ENCODE measurements at regions of chr3 and their contacts with region 1.

Region 1: GRCh38 chr3:56702490-56703315 is 19.6 kb upstream of the TASOR start:
- DNase-seq: peak; percentile 63
- H3K4me3 Mint-ChIP-seq: no peak overlapping the region
- H3K27ac Mint-ChIP-seq: no peak overlapping the region
- H3K4me1 Mint-ChIP-seq: peaks cover 33% of the 10 kb centered on the region
- H3K27me3 Mint-ChIP-seq: peaks cover 7% of the 10 kb centered on the region

Region 2: GRCh38 chr3:56443372-56443771 is 259.3 kb before region 1 on chr3:
- CTCF ChIA-PET with region 1: no interaction called
- DNase-seq: no peak
- H3K4me3 Mint-ChIP-seq: no peak overlapping the region
- H3K27ac Mint-ChIP-seq: no peak overlapping the region
- H3K4me1 Mint-ChIP-seq: no peaks in the 10 kb centered on the region
- H3K27me3 Mint-ChIP-seq: no peaks in the 10 kb centered on the region

Region 3: GRCh38 chr3:56469141-56469540 is 233.6 kb before region 1 on chr3:
- CTCF ChIA-PET with region 1: no interaction called
- DNase-seq: no peak
- H3K4me3 Mint-ChIP-seq: no peak overlapping the region
- H3K27ac Mint-ChIP-seq: no peak overlapping the region
- H3K4me1 Mint-ChIP-seq: peaks cover 5% of the 10 kb centered on the region
- H3K27me3 Mint-ChIP-seq: peaks cover 75% of the 10 kb centered on the region

Region 4: GRCh38 chr3:56783644-56784447 is 81.1 kb after region 1 on chr3:
- CTCF ChIA-PET with region 1: interaction called, 11 read pairs
- DNase-seq: peak; percentile 84
- H3K4me3 Mint-ChIP-seq: peak overlapping the region; percentile 62
- H3K27ac Mint-ChIP-seq: peak overlapping the region; percentile 99
- H3K4me1 Mint-ChIP-seq: peaks cover 98% of the 10 kb centered on the region
- H3K27me3 Mint-ChIP-seq: no peaks in the 10 kb centered on the region

Region 5: GRCh38 chr3:56915966-56916586 is 213.4 kb after region 1 on chr3:
- CTCF ChIA-PET with region 1: interaction called, 12 read pairs
- DNase-seq: peak; percentile 88
- H3K4me3 Mint-ChIP-seq: peak overlapping the region; percentile 98
- H3K27ac Mint-ChIP-seq: peak overlapping the region; percentile 100
- H3K4me1 Mint-ChIP-seq: peaks cover 72% of the 10 kb centered on the region
- H3K27me3 Mint-ChIP-seq: no peaks in the 10 kb centered on the region

Region 6: DNA sequence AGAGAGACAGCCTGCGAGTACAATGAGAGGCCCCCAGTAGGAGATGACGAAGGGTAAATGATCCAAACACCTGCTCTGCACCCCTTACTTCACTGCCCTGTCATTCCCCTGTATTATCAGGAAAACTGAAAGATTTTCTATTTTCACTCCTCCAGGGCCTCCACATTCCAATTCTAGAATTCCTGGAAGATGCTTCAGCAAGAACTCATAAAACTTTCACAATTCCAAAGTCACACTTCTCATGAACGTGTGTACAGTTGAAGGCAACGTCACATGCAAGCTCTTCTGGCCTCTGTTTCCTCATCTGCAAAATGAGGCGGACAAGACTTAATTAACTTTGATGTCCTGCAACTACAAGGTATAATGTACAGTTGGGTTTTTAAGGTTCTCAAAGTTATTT is 295.0 kb after region 1 on chr3:
- CTCF ChIA-PET with region 1: interaction called, 13 read pairs
- DNase-seq: no peak
- H3K4me3 Mint-ChIP-seq: no peak overlapping the region
- H3K27ac Mint-ChIP-seq: no peak overlapping the region
- H3K4me1 Mint-ChIP-seq: peaks cover 3% of the 10 kb centered on the region
- H3K27me3 Mint-ChIP-seq: peaks cover 17% of the 10 kb centered on the region